Right ventricle myocardium inferior (tissue), 1 donor: ENCODE measurements at regions of chr1 and their contacts with region 1.

Region 1: DNA sequence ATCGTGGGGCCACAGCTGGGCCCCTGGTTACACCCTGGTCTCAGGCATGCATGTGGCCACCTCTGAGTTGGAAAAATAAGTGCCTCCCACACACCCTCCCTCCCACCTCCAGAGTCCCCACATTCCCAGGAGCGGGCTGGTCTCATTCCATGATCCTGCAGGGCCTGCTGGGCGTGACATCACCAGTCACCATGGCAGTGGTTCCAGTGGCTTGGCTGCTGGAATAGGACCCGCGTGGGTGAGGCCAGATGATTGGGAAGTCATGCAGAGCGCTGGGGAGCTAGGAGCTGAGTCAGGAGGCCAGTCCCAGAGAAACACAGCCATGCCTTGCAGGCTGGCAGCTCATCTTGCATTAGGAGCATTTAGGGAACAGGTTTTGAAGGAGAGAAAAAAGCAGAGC is 125.4 kb upstream of the TMEM51 start:
- DNase-seq: peak; percentile 70
- ATAC-seq: peak; percentile 62

Region 2: GRCh38 chr1:14915356-14916054 is 112.6 kb before region 1 on chr1:
- intact Hi-C with region 1: loop called (anchors 1 kb)
- DNase-seq: no peak
- ATAC-seq: peak; percentile 51

Region 3: DNA sequence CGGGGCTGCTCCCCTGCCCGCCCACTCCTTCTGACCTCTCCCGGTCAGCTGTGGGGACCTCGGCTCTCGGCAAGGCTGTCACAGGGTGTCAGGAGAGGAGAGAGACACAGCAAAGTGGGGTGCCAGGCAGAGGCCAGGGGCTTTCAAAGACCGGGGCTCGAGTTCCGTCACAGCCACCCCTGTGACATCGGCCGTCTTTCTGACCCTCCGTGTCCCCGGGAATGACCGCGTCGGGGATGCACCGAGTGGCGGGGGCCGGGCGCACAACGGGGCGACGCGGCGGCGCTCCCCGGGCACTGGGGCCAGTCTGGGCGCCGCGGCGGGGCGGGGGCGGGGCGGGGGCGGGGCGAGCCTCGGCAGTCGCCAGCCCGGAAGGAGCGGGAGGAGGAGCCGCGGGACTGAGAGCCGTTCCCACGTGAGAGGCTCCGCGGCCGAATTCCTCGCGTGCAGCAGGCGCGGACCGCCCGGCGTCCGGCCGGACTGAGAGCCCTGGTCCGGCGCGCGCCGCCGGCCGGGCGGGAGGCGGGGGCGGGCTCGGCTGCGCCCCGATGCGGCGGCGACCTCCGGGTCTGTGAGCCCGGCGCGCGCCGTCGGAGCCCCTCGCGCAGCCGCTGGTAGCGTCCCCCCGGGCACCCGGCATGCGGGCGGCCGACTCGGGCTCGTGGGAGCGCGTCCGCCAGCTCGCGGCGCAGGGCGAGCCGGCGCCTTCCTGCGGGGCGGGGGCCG is 104.2 kb before region 1 on chr1:
- intact Hi-C with region 1: loop called (anchors 2 kb)
- DNase-seq: peak; percentile 81
- ATAC-seq: peak; percentile 60

Region 4: GRCh38 chr1:15188130-15188524 is 160.0 kb after region 1 on chr1:
- intact Hi-C with region 1: no loop called
- DNase-seq: no peak
- ATAC-seq: peak; percentile 16